Naive thymus-derived CD4-positive, alpha-beta T cell (primary cell): ENCODE measurements at regions of chr5 and their contacts with region 1.

Region 1: DNA sequence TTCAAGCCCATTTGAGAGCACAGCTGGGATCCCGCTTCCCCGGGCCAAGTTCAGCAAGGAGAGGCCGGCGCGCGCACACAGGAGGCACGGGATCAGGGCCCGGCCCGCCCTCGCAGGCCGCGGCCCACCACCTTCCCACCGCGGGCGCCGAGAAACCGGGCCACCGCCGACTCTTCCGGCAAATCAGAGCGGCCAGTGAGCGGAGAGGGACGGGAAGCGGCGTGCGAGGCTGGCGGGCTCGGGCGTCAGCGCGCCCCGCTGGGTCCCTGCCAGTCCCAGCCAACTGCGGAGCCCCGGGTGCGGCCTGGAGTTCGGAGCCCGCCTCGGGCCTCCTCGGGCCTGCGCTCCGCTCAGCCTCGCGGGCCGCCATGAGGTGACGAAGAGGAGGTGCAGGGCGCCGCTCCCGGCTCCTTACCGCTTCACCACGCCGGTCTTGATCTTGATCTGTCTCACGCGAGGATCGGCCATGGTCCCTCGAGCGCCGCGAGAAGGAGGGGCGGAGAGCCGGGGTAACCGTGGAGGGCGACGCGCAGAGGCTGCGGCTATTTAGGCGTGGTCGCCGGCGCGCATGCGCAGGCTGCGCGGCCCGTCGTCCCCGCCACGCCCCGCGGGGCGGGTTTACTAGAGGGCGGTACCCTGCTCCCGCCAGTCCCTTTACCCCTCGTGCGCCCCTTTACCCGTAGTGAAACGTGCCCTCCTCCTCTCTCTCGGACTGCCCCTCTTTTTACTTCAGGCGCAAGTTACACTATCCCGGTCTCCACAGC is at the start of gene TBCA:
- DNase-seq: peak; percentile 87 to 94 (median 93)
- ATAC-seq: peak; percentile 92
- H3K4me3 ChIP-seq: peak within 1 kb of the TSS; percentile 72
- H3K4me3 Mint-ChIP-seq: peak within 1 kb of the TSS; percentile 90 to 99 (median 94)
- H3K27ac ChIP-seq: peak within 1 kb of the TSS; percentile 97
- H3K27ac Mint-ChIP-seq: peak within 1 kb of the TSS; percentile 96 to 98 (median 97)
- H3K4me1 ChIP-seq: peaks cover 13 to 26% of the 10 kb centered on the region in 2 donors
- H3K4me1 Mint-ChIP-seq: peaks cover 32 to 60% (median 49%) of the 10 kb centered on the region in 7 donors
- H3K27me3 ChIP-seq: no peaks in the 10 kb centered on the region
- H3K27me3 Mint-ChIP-seq: no peaks in the 10 kb centered on the region
- total RNA-seq, gene TBCA: 71.3 to 137 (median 89.3) TPM

Region 2: DNA sequence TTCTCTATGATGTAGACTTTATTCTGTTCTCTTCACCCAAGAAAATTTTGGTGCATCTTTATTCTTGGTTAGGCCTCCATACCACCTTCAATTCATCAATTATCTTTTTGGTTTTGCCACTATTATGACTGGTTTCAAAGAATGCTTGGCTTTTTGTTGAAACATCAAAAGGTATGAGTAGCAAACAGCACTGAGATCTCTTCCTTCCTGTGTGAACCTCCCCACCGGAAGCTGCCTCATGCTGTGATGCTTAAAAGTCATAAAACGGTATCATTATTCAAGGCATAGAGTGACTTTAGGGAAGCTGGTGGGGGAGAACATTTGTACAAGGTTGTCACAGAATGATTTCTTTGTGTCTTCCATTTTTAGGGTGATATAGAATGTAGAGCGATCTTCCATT is 1302.3 kb before region 1 on chr5:
- CTCF ChIA-PET with region 1: no interaction called
- POLR2A ChIA-PET with region 1: no interaction called
- intact Hi-C with region 1: loop called in 1 of 2 experiments (anchors 5 kb)
- DNase-seq: peak; percentile 13 to 89 (median 83)
- ATAC-seq: peak; percentile 95
- H3K4me3 ChIP-seq: no peak overlapping the region
- H3K4me3 Mint-ChIP-seq: peak overlapping the region; percentile 19 to 78 (median 58)
- H3K27ac ChIP-seq: peak overlapping the region; percentile 59
- H3K27ac Mint-ChIP-seq: peak overlapping the region; percentile 72 to 98 (median 93)
- H3K4me1 ChIP-seq: peaks cover 54 to 67% of the 10 kb centered on the region in 2 donors
- H3K4me1 Mint-ChIP-seq: peaks cover 56 to 88% (median 79%) of the 10 kb centered on the region in 7 donors
- H3K27me3 ChIP-seq: no peaks in the 10 kb centered on the region
- H3K27me3 Mint-ChIP-seq: no peaks in the 10 kb centered on the region

Region 3: GRCh38 chr5:77630258-77631089 is 145.5 kb before region 1 on chr5:
- CTCF ChIA-PET with region 1: no interaction called
- POLR2A ChIA-PET with region 1: no interaction called
- intact Hi-C with region 1: loop called in 1 of 2 experiments (anchors 5 kb)
- DNase-seq: peak in 2 of 9 donors; percentile 22 to 46
- ATAC-seq: peak; percentile 76
- H3K4me3 ChIP-seq: peak overlapping the region; percentile 19
- H3K4me3 Mint-ChIP-seq: peak overlapping the region; percentile 63 to 86 (median 80)
- H3K27ac ChIP-seq: no peak overlapping the region
- H3K27ac Mint-ChIP-seq: peak overlapping the region in 3 of 9 donors; percentile 3 to 73 (median 21)
- H3K4me1 ChIP-seq: peaks cover 0 to 8% of the 10 kb centered on the region in 2 donors
- H3K4me1 Mint-ChIP-seq: peaks cover 16 to 33% (median 25%) of the 10 kb centered on the region in 7 donors
- H3K27me3 ChIP-seq: peaks cover 22 to 73% of the 10 kb centered on the region in 2 donors
- H3K27me3 Mint-ChIP-seq: peaks cover 66 to 84% (median 74%) of the 10 kb centered on the region in 5 donors

Region 4: DNA sequence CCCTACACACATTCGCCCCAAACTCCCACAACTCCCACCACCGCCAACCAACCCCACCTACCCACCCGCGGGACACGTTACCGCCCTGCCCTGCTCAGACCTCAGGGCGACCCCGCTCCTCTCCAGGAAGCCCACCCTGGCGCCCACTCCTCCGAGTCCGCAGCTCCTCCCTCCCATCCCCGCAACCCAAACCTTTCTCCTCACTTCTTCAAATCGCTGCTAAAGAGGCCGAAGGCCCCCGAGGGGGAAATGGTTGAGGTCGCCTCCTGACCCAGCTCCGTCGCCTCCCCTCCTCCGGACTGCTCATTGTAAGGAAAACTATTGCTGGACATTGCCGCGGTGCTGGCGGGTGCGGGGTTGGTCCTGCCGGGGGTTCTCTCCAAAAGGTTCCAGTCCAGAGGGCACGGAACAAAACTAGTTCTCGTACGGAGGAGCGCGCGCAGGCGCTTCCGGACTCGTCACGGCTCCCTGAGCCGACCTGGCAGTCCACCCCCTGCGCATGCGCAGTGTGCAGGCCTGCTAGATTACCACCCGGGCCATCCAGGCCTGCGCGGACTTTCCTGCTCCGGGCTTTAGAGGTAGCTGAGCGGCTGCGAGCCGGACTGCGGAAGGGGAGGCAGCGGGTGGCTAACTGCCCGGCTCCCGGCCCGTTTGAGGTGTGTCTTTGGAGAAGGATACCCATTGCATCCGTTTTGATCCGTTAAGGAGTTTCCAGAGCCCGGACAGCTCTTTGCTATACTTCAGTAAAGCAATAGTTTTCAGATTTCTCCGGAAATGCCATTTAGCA is 518.5 kb after region 1 on chr5 and contains the start of gene AP3B1:
- CTCF ChIA-PET with region 1: no interaction called
- POLR2A ChIA-PET with region 1: no interaction called
- intact Hi-C with region 1: loop called (anchors 1 kb)
- DNase-seq: peak; percentile 94 to 98 (median 96)
- ATAC-seq: peak; percentile 97
- H3K4me3 ChIP-seq: peak within 1 kb of the TSS; percentile 98
- H3K4me3 Mint-ChIP-seq: peak within 1 kb of the TSS; percentile 86 to 100 (median 98)
- H3K27ac ChIP-seq: peak within 1 kb of the TSS; percentile 88
- H3K27ac Mint-ChIP-seq: peak within 1 kb of the TSS; percentile 77 to 99 (median 97)
- H3K4me1 ChIP-seq: peaks cover 5 to 9% of the 10 kb centered on the region in 2 donors
- H3K4me1 Mint-ChIP-seq: peaks cover 27 to 50% (median 46%) of the 10 kb centered on the region in 7 donors
- H3K27me3 ChIP-seq: no peaks in the 10 kb centered on the region
- H3K27me3 Mint-ChIP-seq: peaks cover 0 to 11% (median 0%) of the 10 kb centered on the region in 5 donors
- total RNA-seq, gene AP3B1: 30.2 to 45.0 (median 37.2) TPM

Region 5: GRCh38 chr5:79514391-79515105 is 1738.6 kb after region 1 on chr5:
- CTCF ChIA-PET with region 1: no interaction called
- POLR2A ChIA-PET with region 1: no interaction called
- intact Hi-C with region 1: loop called in 1 of 2 experiments (anchors 5 kb)
- DNase-seq: peak; percentile 80 to 94 (median 91)
- ATAC-seq: peak; percentile 91
- H3K4me3 ChIP-seq: peak overlapping the region; percentile 71
- H3K4me3 Mint-ChIP-seq: peak overlapping the region; percentile 88 to 99 (median 98)
- H3K27ac ChIP-seq: peak overlapping the region; percentile 97
- H3K27ac Mint-ChIP-seq: peak overlapping the region; percentile 93 to 99 (median 98)
- H3K4me1 ChIP-seq: peaks cover 4 to 26% of the 10 kb centered on the region in 2 donors
- H3K4me1 Mint-ChIP-seq: peaks cover 6 to 53% (median 40%) of the 10 kb centered on the region in 7 donors
- H3K27me3 ChIP-seq: peaks cover 0 to 7% of the 10 kb centered on the region in 2 donors
- H3K27me3 Mint-ChIP-seq: peaks cover 0 to 27% (median 23%) of the 10 kb centered on the region in 5 donors